ENCODE measurements at regions of chr19 and their contacts with region 1.

Region 1: DNA sequence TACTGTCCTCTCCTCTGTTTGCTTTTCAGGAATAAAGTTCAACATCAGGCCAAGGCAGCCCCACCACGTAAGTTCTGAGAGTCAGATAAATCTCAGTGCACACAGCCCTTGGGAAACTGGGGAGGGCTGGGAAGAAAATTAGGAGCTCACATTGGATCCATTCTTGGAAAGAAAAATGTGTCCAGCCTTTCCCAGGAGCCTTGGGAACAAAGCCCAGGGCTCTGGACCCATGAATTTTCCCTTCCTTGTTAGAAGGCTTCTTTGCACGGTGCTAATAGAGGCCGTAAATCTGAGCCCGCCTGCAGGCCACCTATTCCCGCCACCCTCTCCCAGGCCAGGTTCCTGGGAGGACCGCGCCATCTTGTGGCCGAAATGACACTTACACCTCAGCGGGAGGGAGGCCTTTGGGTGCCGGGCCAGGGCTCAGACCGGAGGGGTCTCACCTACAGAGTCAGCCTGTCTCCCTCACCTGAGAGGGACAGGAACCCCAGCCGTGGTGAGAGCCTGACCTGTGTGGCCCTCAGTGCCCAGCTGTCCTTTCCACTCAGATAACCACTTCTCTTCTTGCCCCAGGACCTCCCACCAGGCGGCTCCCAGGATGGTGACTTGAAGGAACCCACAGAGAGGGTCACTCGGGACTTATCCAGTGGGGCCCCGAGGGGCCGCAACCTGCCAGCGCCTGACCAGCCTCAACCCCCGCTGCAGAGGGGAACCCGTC is 25.1 kb upstream of the KCTD15 start:
- DNase-seq: peak; percentile 56 to 91 (median 80)

Region 2: GRCh38 chr19:33235269-33235995 is 536.1 kb before region 1 on chr19:
- intact Hi-C with region 1: loop called (anchors 10 kb)
- DNase-seq: peak in 41 of 42 donors; percentile 59 to 94 (median 84)

Region 3: GRCh38 chr19:33430674-33431277 is 340.8 kb before region 1 on chr19:
- intact Hi-C with region 1: loop called (anchors 5 kb)
- DNase-seq: peak; percentile 63 to 92 (median 82)

Region 4: GRCh38 chr19:33752018-33752800 is 19.3 kb before region 1 on chr19:
- intact Hi-C with region 1: no loop called
- DNase-seq: peak in 37 of 42 donors; percentile 22 to 84 (median 56)

Region 5: GRCh38 chr19:33921165-33921564 is 149.6 kb after region 1 on chr19:
- intact Hi-C with region 1: no loop called
- DNase-seq: no peak